ENCODE measurements at regions of chr10 and their contacts with region 1.

Region 1: GRCh38 chr10:58531084-58531695 is 18.5 kb downstream of the BICC1 start:
- DNase-seq: peak; percentile 78
- H3K4me3 ChIP-seq: no peak overlapping the region
- H3K27ac ChIP-seq: no peak overlapping the region
- H3K4me1 ChIP-seq: no peaks in the 10 kb centered on the region
- H3K27me3 ChIP-seq: peaks cover 4% of the 10 kb centered on the region
- CTCF ChIP-seq: peak; percentile 79

Region 2: GRCh38 chr10:58641095-58641531 is 109.9 kb after region 1 on chr10:
- CTCF ChIA-PET with region 1: interaction called, 4 read pairs
- POLR2A ChIA-PET with region 1: no interaction called
- intact Hi-C with region 1: loop called (anchors 2 kb)
- DNase-seq: peak; percentile 30
- H3K4me3 ChIP-seq: no peak overlapping the region
- H3K27ac ChIP-seq: no peak overlapping the region
- H3K4me1 ChIP-seq: no peaks in the 10 kb centered on the region
- H3K27me3 ChIP-seq: no peaks in the 10 kb centered on the region
- CTCF ChIP-seq: peak; percentile 50

Region 3: DNA sequence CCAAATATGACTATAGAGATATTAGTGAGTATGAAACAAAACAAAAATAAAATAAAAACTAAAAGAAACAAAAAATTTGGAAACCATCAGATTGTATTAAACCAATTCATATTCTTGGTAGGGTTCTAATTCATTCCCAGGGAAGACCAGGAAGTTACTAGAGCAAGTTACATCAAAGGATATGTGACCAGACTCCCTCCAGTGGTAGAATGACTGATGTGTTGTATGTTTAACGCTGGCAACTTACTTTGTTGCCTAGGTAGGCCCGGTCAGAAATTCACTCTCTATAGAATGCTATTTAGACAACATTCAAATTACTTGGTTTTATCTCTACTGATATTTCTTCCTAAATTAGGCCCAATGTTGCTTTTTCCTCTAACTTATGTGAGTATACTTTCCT is 650.5 kb after region 1 on chr10:
- CTCF ChIA-PET with region 1: no interaction called
- POLR2A ChIA-PET with region 1: no interaction called
- intact Hi-C with region 1: loop called (anchors 5 kb)
- DNase-seq: peak; percentile 58
- H3K4me3 ChIP-seq: no peak overlapping the region
- H3K27ac ChIP-seq: no peak overlapping the region
- H3K4me1 ChIP-seq: no peaks in the 10 kb centered on the region
- H3K27me3 ChIP-seq: peaks cover 31% of the 10 kb centered on the region
- CTCF ChIP-seq: peak; percentile 62